Activated T-helper 1 cell treated with anti-CD3 and anti-CD28 coated beads, Interleukin-12 subunit alpha, Interleukin-12 subunit beta, Interleukin-2, Interleukin-4 antibody, amounts not matched to agents 30 ng/mL and 10 ng/mL and 1 ng/mL, durations not matched to agents 14 hours and 24 hours and 36 hours (primary cell): ENCODE measurements at regions of chr17 and their contacts with region 1.

Region 1: GRCh38 chr17:42405963-42406495 is 17.0 kb downstream of the CAVIN1 start:
- DNase-seq: peak; percentile 73
- H3K4me3 Mint-ChIP-seq: no peak overlapping the region
- H3K27ac Mint-ChIP-seq: no peak overlapping the region
- H3K4me1 Mint-ChIP-seq: peaks cover 28% of the 10 kb centered on the region
- H3K27me3 Mint-ChIP-seq: peaks cover 8% of the 10 kb centered on the region

Region 2: GRCh38 chr17:42221937-42222745 is 183.9 kb before region 1 on chr17:
- intact Hi-C with region 1: loop called (anchors 1 kb)
- DNase-seq: peak; percentile 38
- H3K4me3 Mint-ChIP-seq: no peak overlapping the region
- H3K27ac Mint-ChIP-seq: peak overlapping the region; percentile 46
- H3K4me1 Mint-ChIP-seq: no peaks in the 10 kb centered on the region
- H3K27me3 Mint-ChIP-seq: no peaks in the 10 kb centered on the region

Region 3: GRCh38 chr17:42312285-42313130 is 93.5 kb before region 1 on chr17:
- intact Hi-C with region 1: loop called (anchors 2 kb)
- DNase-seq: peak; percentile 68
- H3K4me3 Mint-ChIP-seq: peak overlapping the region; percentile 81
- H3K27ac Mint-ChIP-seq: peak overlapping the region; percentile 86
- H3K4me1 Mint-ChIP-seq: peaks cover 86% of the 10 kb centered on the region
- H3K27me3 Mint-ChIP-seq: no peaks in the 10 kb centered on the region

Region 4: DNA sequence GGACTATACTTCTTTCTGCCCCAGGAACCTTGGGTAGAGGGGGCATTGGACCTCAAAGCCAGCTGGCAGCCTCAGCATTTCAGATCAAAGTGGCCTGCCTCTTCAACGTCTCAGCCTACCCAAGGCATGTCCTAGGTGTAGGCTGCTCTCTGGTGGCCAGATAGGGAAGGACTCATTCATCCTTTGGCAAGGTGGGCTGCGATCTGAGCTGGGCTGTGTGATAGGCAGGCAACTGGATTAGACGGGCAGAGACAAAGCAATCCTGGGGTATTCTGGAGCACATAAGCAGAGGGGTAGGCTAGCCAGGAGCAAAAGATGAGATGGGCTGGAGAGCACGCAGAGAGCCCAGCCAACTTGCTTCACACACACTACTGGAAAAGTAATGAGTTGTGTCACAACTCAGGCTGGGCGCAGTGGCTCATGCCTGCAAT is 121.3 kb after region 1 on chr17:
- intact Hi-C with region 1: loop called (anchors 5 kb)
- DNase-seq: peak; percentile 51
- H3K4me3 Mint-ChIP-seq: no peak overlapping the region
- H3K27ac Mint-ChIP-seq: no peak overlapping the region
- H3K4me1 Mint-ChIP-seq: peaks cover 24% of the 10 kb centered on the region
- H3K27me3 Mint-ChIP-seq: peaks cover 9% of the 10 kb centered on the region

Region 5: GRCh38 chr17:42832974-42833766 is 427.1 kb after region 1 on chr17 and contains the start of gene PSME3:
- intact Hi-C with region 1: no loop called
- DNase-seq: peak; percentile 88
- H3K4me3 Mint-ChIP-seq: peak within 1 kb of the TSS; percentile 90
- H3K27ac Mint-ChIP-seq: peak within 1 kb of the TSS; percentile 93
- H3K4me1 Mint-ChIP-seq: peaks cover 23% of the 10 kb centered on the region
- H3K27me3 Mint-ChIP-seq: peaks cover 3% of the 10 kb centered on the region
- total RNA-seq, gene PSME3: 217 and 220 TPM in 2 replicates